ENCODE measurements at regions of chr22 and their contacts with region 1.

Region 1: DNA sequence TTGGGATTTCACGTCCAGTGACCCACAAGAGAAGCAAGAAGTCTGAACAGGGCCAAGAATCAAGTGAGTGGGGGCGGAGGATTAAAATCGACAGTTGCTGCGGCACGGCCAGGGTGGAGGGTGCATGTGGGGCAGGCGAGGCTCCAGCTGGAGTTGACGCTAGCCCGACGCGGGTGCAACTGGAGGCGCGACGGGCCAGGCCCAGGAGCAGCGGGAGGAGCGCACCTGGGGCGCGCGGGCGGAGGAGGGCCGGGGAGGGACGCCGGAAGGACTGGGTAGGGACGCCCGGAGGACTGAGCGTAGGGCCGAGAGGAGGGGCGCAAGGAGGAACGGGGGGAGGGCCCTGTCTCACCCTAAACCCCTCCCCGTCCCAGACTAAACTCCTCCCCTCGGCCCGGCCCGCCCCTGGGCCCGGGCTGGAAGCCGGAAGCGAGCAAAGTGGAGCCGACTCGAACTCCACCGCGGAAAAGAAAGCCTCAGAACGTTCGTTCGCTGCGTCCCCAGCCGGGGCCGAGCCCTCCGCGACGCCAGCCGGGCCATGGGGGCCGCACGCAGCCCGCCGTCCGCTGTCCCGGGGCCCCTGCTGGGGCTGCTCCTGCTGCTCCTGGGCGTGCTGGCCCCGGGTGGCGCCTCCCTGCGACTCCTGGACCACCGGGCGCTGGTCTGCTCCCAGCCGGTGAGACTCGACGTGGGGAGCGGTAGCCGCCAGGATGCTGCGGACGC is at the start of gene IL17RA:
- DNase-seq: peak; percentile 97
- total RNA-seq, gene IL17RA: 11.5 to 21.8 TPM

Region 2: GRCh38 chr22:17492247-17492646 is 407.5 kb after region 1 on chr22:
- intact Hi-C with region 1: loop called in 1 of 2 experiments (anchors 10 kb)
- DNase-seq: no peak

Measured in posterior vena cava (tissue), 2 donors.